H1 (cell line): ENCODE measurements at regions of chr5 and their contacts with region 1.

Region 1: GRCh38 chr5:123423278-123424149 is at the start of gene CEP120:
- DNase-seq: peak; percentile 95 to 97
- H3K4me3 ChIP-seq: peak within 1 kb of the TSS; percentile 68 to 92 (median 80)
- H3K27ac ChIP-seq: peak within 1 kb of the TSS; percentile 79
- H3K4me1 ChIP-seq: peaks cover 0 to 7% (median 1%) of the 10 kb centered on the region in 4 experiments; a peak in 2 of 7 replicates
- H3K27me3 ChIP-seq: no peaks in the 10 kb centered on the region
- CTCF ChIP-seq: peak; percentile 70 to 95 (median 84)
- EP300 ChIP-seq: peak in 1 of 2 experiments; percentile 81; a peak in 1 of 3 replicates
- POLR2A ChIP-seq: peak; percentile 52 to 91
- RAD21 ChIP-seq: peak; percentile 52 to 59
- total RNA-seq, gene CEP120: 17.9 and 19.2 TPM in 2 replicates

Region 2: GRCh38 chr5:123235781-123236180 is 187.7 kb before region 1 on chr5:
- CTCF ChIA-PET with region 1: no interaction called
- POLR2A ChIA-PET with region 1: no interaction called
- DNase-seq: no peak
- H3K4me3 ChIP-seq: no peak overlapping the region
- H3K27ac ChIP-seq: no peak overlapping the region
- H3K4me1 ChIP-seq: no peaks in the 10 kb centered on the region
- H3K27me3 ChIP-seq: no peaks in the 10 kb centered on the region
- CTCF ChIP-seq: no peak
- EP300 ChIP-seq: no peak
- POLR2A ChIP-seq: no peak
- RAD21 ChIP-seq: no peak

Region 3: DNA sequence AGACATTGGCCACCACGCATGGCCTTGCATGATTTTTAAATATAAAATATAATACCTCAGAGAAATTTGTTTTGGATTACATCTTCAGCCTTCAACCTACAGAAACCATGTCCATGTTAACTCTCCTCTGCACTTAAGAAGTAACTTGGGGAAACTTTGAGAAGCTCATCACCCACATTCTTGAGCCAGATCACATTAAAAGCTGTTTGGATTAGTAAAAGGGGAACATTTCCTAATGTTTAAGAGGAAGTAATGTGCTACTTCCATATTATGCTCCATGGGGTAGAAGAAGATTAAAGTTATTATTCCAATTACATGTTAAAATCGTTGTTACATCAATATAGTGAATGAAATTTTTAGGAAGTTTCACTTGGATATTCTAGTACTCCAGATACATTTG is 10.1 kb after region 1 on chr5:
- CTCF ChIA-PET with region 1: interaction called, 8 read pairs
- POLR2A ChIA-PET with region 1: interaction called, 10 read pairs
- DNase-seq: no peak
- H3K4me3 ChIP-seq: no peak overlapping the region
- H3K27ac ChIP-seq: no peak overlapping the region
- H3K4me1 ChIP-seq: no peaks in the 10 kb centered on the region
- H3K27me3 ChIP-seq: no peaks in the 10 kb centered on the region; a peak in 1 of 7 replicates
- CTCF ChIP-seq: no peak
- EP300 ChIP-seq: no peak
- POLR2A ChIP-seq: no peak
- RAD21 ChIP-seq: no peak

Region 4: DNA sequence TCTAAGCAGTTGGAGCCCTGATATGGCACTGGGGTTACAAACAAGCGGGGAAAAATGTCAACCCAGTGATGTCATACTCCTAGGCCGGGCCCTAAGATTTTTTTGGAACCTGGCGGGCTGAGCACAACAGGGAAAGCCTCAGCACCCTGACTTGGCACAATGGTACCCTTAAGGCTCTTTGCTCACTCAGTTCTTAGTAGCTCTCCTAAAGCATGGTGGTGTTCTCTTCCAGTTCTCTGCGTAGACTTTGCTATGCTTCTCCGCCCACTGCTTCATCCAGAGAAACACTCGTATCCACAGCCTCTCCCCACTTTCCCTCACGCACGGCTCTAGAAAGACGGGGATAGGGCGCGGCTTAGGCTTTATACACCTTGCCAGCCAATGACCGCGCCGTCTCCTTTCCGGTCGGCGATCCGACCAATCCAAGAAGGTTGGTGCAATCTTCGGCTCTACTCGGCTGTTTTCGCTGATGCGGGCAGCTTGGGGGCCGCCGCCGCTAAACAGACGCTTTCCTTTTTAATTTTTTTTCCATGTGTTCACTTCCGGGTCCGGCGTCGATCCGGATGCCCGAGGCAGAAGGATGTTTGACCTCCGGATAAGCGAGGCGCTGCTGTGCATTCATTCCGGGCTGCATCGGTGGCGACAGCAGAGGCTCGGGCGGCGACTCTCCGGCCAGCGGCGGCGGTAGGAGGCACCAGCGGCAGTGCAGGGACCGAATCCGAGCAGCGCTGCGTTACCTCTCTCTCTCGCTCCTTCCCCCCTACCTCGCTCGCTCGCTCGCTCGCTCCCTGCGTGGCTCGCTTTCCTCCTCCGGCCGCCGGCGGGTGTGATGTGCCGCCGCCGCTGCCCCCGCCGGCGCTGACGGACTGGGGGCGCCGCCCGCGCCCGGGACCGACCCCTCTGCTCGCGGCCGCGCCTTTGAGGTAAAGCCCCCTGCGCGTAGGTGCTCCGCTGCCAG is 88.4 kb after region 1 on chr5 and contains the start of gene CSNK1G3:
- CTCF ChIA-PET with region 1: interaction called, 5 read pairs
- POLR2A ChIA-PET with region 1: interaction called, 30 read pairs
- DNase-seq: peak; percentile 87 to 91
- H3K4me3 ChIP-seq: peak within 1 kb of the TSS; percentile 67 to 94 (median 80)
- H3K27ac ChIP-seq: peak within 1 kb of the TSS; percentile 87
- H3K4me1 ChIP-seq: peaks cover 0 to 9% (median 4%) of the 10 kb centered on the region in 4 experiments; a peak in 5 of 7 replicates
- H3K27me3 ChIP-seq: no peaks in the 10 kb centered on the region
- CTCF ChIP-seq: peak in 1 of 3 experiments; percentile 12; a peak in 1 of 4 replicates
- EP300 ChIP-seq: 0 out of 3 replicates have a peak, but pooled peaks of 1 of the 2 experiments have one; percentile 45
- POLR2A ChIP-seq: peak; percentile 97 to 99
- RAD21 ChIP-seq: 0 out of 4 replicates have a peak, but pooled peaks of 1 of the 2 experiments have one; percentile 4
- total RNA-seq, gene CSNK1G3: 54.8 and 58.9 TPM in 2 replicates

Region 5: GRCh38 chr5:123545506-123545905 is 122.0 kb after region 1 on chr5:
- CTCF ChIA-PET with region 1: interaction called, 12 read pairs
- POLR2A ChIA-PET with region 1: no interaction called
- DNase-seq: no peak
- H3K4me3 ChIP-seq: no peak overlapping the region
- H3K27ac ChIP-seq: no peak overlapping the region
- H3K4me1 ChIP-seq: no peaks in the 10 kb centered on the region; a peak in 1 of 7 replicates
- H3K27me3 ChIP-seq: no peaks in the 10 kb centered on the region
- CTCF ChIP-seq: peak; percentile 41 to 66 (median 61)
- EP300 ChIP-seq: no peak
- POLR2A ChIP-seq: no peak
- RAD21 ChIP-seq: peak; percentile 64 to 66

Region 6: DNA sequence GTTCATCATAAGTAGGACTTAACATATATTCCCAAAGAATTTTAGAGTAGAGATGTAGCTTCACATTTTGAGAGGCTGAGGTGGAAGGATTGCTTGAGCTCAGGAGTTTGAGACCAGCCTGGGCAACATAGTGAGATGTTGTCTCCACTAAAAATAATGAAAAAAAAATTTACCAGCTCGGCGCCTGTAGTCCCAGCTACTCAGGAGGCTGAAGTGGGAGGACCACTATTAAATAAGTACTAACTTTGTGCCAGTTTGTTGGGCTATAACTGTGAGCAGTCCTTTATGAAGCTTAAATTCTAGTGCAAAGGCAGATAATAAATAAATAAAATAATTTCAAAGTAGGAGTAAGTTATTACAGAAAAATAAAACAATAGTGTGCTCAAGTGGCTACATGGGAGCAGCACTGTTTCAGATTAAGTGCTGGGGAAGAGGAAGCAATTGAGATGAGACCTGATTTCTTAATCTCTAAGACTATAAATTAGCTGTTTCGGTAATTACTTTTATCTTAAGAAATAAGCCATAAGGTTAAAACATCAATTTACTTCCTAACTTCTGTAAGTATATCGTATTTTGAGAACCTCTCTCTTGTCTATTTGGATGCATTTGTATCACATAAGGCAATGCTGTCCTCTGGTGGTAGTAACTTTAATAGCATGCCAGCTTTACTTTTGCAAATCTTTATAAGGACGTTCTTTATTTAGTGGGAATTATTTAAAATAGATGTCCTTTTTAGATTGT is 187.3 kb after region 1 on chr5:
- CTCF ChIA-PET with region 1: interaction called, 13 read pairs
- POLR2A ChIA-PET with region 1: no interaction called
- DNase-seq: no peak
- H3K4me3 ChIP-seq: no peak overlapping the region
- H3K27ac ChIP-seq: no peak overlapping the region
- H3K4me1 ChIP-seq: no peaks in the 10 kb centered on the region
- H3K27me3 ChIP-seq: no peaks in the 10 kb centered on the region
- CTCF ChIP-seq: peak in 2 of 3 experiments; percentile 35 to 76; a peak in 2 of 4 replicates
- EP300 ChIP-seq: no peak
- POLR2A ChIP-seq: no peak
- RAD21 ChIP-seq: peak; percentile 79 to 91